Breast epithelium (tissue), 4 donors: ENCODE measurements at regions of chr4 and their contacts with region 1.

Region 1: GRCh38 chr4:11228546-11228945 is 200.1 kb downstream of the HS3ST1 start:
- DNase-seq: no peak
- H3K4me3 ChIP-seq: no peak overlapping the region
- H3K27ac ChIP-seq: no peak overlapping the region
- H3K4me1 ChIP-seq: no peaks in the 10 kb centered on the region
- H3K27me3 ChIP-seq: no peaks in the 10 kb centered on the region
- CTCF ChIP-seq: no peak
- POLR2A ChIP-seq: no peak

Region 2: DNA sequence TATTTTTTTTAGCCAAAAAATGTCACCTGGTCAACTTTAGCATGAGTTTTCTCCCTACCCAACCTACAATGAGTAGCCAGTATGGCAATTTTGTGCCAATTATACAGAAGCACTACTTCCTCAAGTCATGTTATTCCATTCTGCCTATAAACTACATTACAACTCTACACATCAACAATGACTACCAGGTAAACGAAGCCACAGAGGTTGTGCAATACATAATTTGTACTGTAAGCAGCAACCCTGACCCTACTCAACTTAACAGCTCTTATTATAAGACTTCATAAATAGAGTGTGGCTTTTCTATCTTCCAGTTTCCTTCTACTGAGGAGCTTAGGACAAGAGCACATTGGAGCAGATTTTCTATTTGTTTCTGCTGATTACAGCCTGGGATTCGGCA is 39.6 kb after region 1 on chr4:
- intact Hi-C with region 1: loop called (anchors 2 kb)
- DNase-seq: no peak
- H3K4me3 ChIP-seq: no peak overlapping the region
- H3K27ac ChIP-seq: no peak overlapping the region
- H3K4me1 ChIP-seq: no peaks in the 10 kb centered on the region
- H3K27me3 ChIP-seq: no peaks in the 10 kb centered on the region
- CTCF ChIP-seq: no peak
- POLR2A ChIP-seq: no peak